A673 (cell line): ENCODE measurements at regions of chr10 and their contacts with region 1.

Region 1: GRCh38 chr10:102175415-102175814 is 23.2 kb downstream of the NOLC1 start:
- DNase-seq: no peak
- H3K4me3 ChIP-seq: no peak overlapping the region
- H3K27ac ChIP-seq: no peak overlapping the region
- H3K4me1 ChIP-seq: no peaks in the 10 kb centered on the region
- H3K27me3 ChIP-seq: no peaks in the 10 kb centered on the region
- CTCF ChIP-seq: no peak

Region 2: GRCh38 chr10:101161494-101162299 is 1013.7 kb before region 1 on chr10:
- CTCF ChIA-PET with region 1: no interaction called
- POLR2A ChIA-PET with region 1: interaction called, 19 read pairs
- intact Hi-C with region 1: no loop called
- DNase-seq: peak; percentile 84
- H3K4me3 ChIP-seq: peak overlapping the region; percentile 32
- H3K27ac ChIP-seq: no peak overlapping the region
- H3K4me1 ChIP-seq: peaks cover 13% of the 10 kb centered on the region
- H3K27me3 ChIP-seq: no peaks in the 10 kb centered on the region
- CTCF ChIP-seq: peak; percentile 98

Region 3: DNA sequence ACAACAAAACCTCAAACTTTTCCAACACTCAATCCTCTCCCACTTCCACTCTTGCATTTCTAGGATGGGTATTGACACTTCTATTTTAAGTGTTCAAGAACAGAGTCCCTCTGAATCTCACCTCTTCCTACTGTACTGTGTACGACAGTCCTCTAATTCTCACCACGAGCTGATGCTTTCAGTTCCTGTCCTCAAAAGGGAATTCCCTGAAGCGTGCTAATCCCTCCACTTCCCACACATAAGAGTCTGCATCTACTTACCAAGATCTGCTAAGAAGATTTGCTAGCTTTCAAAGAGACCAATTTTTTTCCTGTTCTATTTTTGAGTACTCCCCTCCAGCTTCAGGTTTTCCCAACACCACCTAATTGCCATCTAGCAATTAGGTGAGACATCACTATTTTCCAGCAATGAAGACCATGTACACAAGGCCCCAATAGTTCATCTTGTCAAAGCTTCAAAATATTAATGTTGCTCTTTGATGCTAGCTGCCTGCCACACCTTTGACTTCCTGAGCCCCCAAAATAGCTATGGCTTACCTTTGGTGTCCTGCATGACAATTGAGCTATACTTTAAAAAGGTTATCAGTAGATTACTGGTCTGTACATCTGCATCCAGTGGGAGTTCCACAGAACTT is 173.9 kb before region 1 on chr10:
- CTCF ChIA-PET with region 1: no interaction called
- POLR2A ChIA-PET with region 1: no interaction called
- intact Hi-C with region 1: no loop called
- DNase-seq: peak; percentile 56
- H3K4me3 ChIP-seq: no peak overlapping the region
- H3K27ac ChIP-seq: no peak overlapping the region
- H3K4me1 ChIP-seq: peaks cover 20% of the 10 kb centered on the region
- H3K27me3 ChIP-seq: no peaks in the 10 kb centered on the region
- CTCF ChIP-seq: no peak

Region 4: GRCh38 chr10:102150970-102151773 is 24.2 kb before region 1 on chr10:
- CTCF ChIA-PET with region 1: no interaction called
- POLR2A ChIA-PET with region 1: no interaction called
- intact Hi-C with region 1: no loop called
- DNase-seq: no peak
- H3K4me3 ChIP-seq: peak overlapping the region; percentile 73
- H3K27ac ChIP-seq: peak overlapping the region; percentile 87
- H3K4me1 ChIP-seq: peaks cover 7% of the 10 kb centered on the region
- H3K27me3 ChIP-seq: no peaks in the 10 kb centered on the region
- CTCF ChIP-seq: no peak

Region 5: DNA sequence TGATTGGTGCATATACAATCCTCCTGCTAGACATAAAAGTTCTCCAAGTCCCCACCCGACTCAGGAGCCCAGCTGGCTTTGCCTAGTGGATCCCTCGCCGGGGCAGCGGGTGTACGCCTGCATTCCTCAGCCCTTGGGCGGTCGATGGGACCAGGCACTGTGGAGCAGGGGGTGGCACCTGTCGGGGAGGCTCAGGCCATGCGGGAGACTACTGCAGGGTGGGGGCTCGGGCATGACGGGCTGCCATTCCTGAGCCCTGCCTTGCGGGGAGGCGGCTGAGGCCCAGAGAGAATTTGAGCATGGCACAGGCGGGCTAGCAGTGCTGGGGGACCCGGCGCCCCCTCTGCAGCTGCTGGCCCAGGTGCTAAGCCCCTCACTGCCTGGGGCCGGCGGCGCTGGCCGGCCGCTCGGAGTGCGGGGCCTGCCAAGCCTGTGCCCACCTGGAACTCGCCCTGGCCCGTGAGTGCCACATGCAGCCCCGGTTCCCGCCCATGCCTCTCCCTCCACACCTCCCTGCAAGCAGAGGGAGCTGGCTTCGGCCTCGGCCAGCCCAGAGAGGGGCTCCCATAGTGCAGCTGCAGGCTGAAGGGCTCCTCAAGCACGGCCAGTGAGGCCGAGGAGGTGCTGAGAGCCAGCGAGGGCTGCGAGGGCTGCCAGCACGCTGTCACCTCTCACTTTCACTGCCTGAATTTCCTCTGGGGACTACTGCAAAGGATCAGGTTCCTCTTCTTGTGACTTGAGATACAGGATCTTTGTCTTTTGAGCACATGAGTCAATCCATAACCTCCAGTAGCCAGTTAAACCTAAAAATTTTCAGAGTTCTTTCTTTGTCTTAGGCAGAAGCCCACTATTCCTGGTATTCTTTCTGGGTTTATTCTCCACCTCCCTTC is 25.6 kb after region 1 on chr10:
- CTCF ChIA-PET with region 1: no interaction called
- POLR2A ChIA-PET with region 1: no interaction called
- intact Hi-C with region 1: no loop called
- DNase-seq: no peak
- H3K4me3 ChIP-seq: no peak overlapping the region
- H3K27ac ChIP-seq: no peak overlapping the region
- H3K4me1 ChIP-seq: no peaks in the 10 kb centered on the region
- H3K27me3 ChIP-seq: no peaks in the 10 kb centered on the region
- CTCF ChIP-seq: no peak

Region 6: GRCh38 chr10:102335184-102335583 is 159.8 kb after region 1 on chr10:
- CTCF ChIA-PET with region 1: no interaction called
- POLR2A ChIA-PET with region 1: no interaction called
- intact Hi-C with region 1: loop called (anchors 5 kb)
- DNase-seq: no peak
- H3K4me3 ChIP-seq: no peak overlapping the region
- H3K27ac ChIP-seq: no peak overlapping the region
- H3K4me1 ChIP-seq: no peaks in the 10 kb centered on the region
- H3K27me3 ChIP-seq: no peaks in the 10 kb centered on the region
- CTCF ChIP-seq: no peak